ENCODE measurements at regions of chr12 and their contacts with region 1.

Region 1: DNA sequence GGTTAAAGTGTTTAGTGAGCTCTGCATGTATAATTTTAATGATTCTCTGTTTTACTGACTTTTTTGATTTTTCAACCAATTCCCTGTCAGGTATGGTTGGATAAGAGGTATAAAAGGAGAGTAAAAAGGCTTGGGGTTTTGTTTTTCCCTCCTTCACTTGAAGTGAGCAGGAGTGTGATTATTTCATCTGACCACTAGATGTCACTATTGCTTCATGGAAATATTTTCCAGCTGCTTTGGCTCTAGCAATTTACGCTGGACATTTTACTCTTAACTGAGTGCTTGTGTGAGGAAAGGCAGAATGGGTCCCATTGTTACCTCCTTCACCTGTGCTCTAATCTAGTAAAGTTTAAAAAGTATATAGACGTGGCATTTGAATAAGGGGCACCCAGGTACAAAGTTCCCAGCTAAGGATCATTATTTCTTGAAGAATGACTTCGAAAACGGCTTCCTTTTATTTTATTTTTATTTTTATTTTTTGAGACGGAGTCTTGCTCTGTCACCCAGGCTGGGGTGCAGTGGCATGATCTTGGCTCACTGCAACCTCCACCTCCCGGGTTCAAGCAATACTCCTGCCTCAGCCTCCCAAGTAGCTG is 66.5 kb downstream of the TBC1D30 start:
- DNase-seq: no peak
- ATAC-seq: peak in 3 of 4 donors; percentile 53 to 64 (median 61)
- H3K4me3 ChIP-seq: no peak overlapping the region
- H3K27ac ChIP-seq: no peak overlapping the region
- H3K4me1 ChIP-seq: no peaks in the 10 kb centered on the region
- H3K27me3 ChIP-seq: peaks cover 0 to 11% (median 0%) of the 10 kb centered on the region in 9 donors
- CTCF ChIP-seq: peak; percentile 71 to 90 (median 80)
- POLR2A ChIP-seq: no peak

Region 2: GRCh38 chr12:64946132-64946829 is 55.3 kb after region 1 on chr12:
- intact Hi-C with region 1: no loop called
- DNase-seq: peak in 4 of 5 donors; percentile 49 to 82 (median 59)
- ATAC-seq: peak; percentile 64 to 91 (median 84)
- H3K4me3 ChIP-seq: no peak overlapping the region
- H3K27ac ChIP-seq: peak overlapping the region in 4 of 12 donors; percentile 3 to 34 (median 13)
- H3K4me1 ChIP-seq: peaks cover 0 to 20% (median 11%) of the 10 kb centered on the region in 12 donors
- H3K27me3 ChIP-seq: no peaks in the 10 kb centered on the region
- CTCF ChIP-seq: no peak
- POLR2A ChIP-seq: no peak

Region 3: GRCh38 chr12:65106948-65107347 is 216.0 kb after region 1 on chr12:
- intact Hi-C with region 1: loop called in 6 of 10 experiments (anchors 5 to 10 kb)
- DNase-seq: no peak
- ATAC-seq: no peak
- H3K4me3 ChIP-seq: no peak overlapping the region
- H3K27ac ChIP-seq: no peak overlapping the region
- H3K4me1 ChIP-seq: no peaks in the 10 kb centered on the region
- H3K27me3 ChIP-seq: peaks cover 0 to 8% (median 0%) of the 10 kb centered on the region in 9 donors
- CTCF ChIP-seq: peak in 7 of 12 donors; percentile 14 to 42 (median 35)
- POLR2A ChIP-seq: no peak

Region 4: GRCh38 chr12:65121049-65121955 is 230.3 kb after region 1 on chr12 and contains the start of gene WIF1:
- intact Hi-C with region 1: loop called in 9 of 10 experiments (anchors 2 to 10 kb)
- DNase-seq: peak in 3 of 5 donors; percentile 19 to 71 (median 24)
- ATAC-seq: peak in 3 of 4 donors; percentile 11 to 42 (median 18)
- H3K4me3 ChIP-seq: peak within 1 kb of the TSS in 11 of 12 donors; percentile 10 to 38 (median 28)
- H3K27ac ChIP-seq: no peak within 1 kb of the TSS
- H3K4me1 ChIP-seq: peaks cover 0 to 13% (median 5%) of the 10 kb centered on the region in 12 donors
- H3K27me3 ChIP-seq: peaks cover 21 to 98% (median 59%) of the 10 kb centered on the region in 9 donors
- CTCF ChIP-seq: peak in 10 of 12 donors; percentile 6 to 40 (median 26)
- POLR2A ChIP-seq: no peak
- total RNA-seq, gene WIF1: not detected

Region 5: DNA sequence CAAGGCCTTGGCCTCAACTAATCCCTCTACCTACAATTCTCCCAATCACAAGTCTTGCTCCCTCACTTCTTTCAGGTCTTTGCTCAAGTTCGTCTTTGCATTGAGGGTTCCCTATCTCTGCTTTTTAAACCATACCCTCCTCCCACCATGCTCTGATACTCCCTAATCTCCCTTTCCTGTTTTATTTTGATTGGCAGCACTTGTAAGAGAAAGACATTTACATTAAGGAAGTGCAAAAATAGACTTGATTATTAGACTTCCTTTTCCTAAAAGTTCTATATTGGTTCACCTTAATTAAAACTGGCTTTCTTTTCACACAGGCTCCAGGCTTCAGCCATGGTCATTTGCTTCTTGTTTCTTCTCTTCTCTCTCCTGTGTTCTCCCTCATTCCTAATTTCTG is 248.4 kb after region 1 on chr12:
- intact Hi-C with region 1: no loop called
- DNase-seq: no peak
- ATAC-seq: no peak
- H3K4me3 ChIP-seq: no peak overlapping the region
- H3K27ac ChIP-seq: no peak overlapping the region
- H3K4me1 ChIP-seq: peaks cover 0 to 6% (median 0%) of the 10 kb centered on the region in 12 donors
- H3K27me3 ChIP-seq: peaks cover 0 to 8% (median 0%) of the 10 kb centered on the region in 9 donors
- CTCF ChIP-seq: no peak
- POLR2A ChIP-seq: no peak

Region 6: DNA sequence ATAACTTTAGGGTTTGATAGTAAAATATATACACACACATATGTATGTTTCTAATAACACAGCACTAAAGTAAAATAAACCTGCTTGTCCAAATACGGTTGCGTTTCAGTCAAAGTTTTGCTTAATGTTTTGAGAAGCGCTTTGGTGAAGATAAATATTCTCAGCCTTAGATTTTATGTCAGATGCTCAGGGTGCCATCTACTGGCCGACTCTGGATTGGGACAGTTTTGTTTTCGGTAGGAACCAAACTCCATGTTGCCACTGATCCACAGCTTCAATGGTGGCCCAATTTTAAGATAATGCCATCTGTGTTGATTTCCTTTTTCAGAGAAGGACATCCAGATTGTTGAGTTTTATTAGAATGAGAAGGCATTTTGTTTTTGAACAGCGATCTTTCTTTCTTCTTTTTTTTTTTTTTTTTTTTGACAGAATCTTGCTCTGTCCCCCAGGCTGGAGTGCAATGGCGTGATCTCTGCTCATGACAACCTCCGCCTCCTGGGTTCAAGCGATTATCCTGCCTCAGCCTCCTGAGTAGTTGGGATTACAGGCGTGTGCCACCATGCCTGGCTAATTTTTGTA is 1196.5 kb after region 1 on chr12:
- intact Hi-C with region 1: loop called in 4 of 10 experiments (anchors 2 to 5 kb)
- DNase-seq: peak; percentile 38 to 64 (median 45)
- ATAC-seq: peak in 3 of 4 donors; percentile 45 to 69 (median 62)
- H3K4me3 ChIP-seq: no peak overlapping the region
- H3K27ac ChIP-seq: no peak overlapping the region
- H3K4me1 ChIP-seq: peaks cover 0 to 2% (median 0%) of the 10 kb centered on the region in 12 donors
- H3K27me3 ChIP-seq: peaks cover 0 to 4% (median 0%) of the 10 kb centered on the region in 9 donors
- CTCF ChIP-seq: peak; percentile 56 to 85 (median 77)
- POLR2A ChIP-seq: no peak

Region 7: GRCh38 chr12:66107451-66107915 is 1216.5 kb after region 1 on chr12:
- intact Hi-C with region 1: loop called in 8 of 10 experiments (anchors 5 to 10 kb)
- DNase-seq: peak in 3 of 5 donors; percentile 34 to 37 (median 36)
- ATAC-seq: peak in 3 of 4 donors; percentile 75 to 87 (median 83)
- H3K4me3 ChIP-seq: no peak overlapping the region
- H3K27ac ChIP-seq: no peak overlapping the region
- H3K4me1 ChIP-seq: peaks cover 0 to 6% (median 0%) of the 10 kb centered on the region in 12 donors
- H3K27me3 ChIP-seq: no peaks in the 10 kb centered on the region
- CTCF ChIP-seq: peak; percentile 63 to 87 (median 80)
- POLR2A ChIP-seq: no peak

Region 8: DNA sequence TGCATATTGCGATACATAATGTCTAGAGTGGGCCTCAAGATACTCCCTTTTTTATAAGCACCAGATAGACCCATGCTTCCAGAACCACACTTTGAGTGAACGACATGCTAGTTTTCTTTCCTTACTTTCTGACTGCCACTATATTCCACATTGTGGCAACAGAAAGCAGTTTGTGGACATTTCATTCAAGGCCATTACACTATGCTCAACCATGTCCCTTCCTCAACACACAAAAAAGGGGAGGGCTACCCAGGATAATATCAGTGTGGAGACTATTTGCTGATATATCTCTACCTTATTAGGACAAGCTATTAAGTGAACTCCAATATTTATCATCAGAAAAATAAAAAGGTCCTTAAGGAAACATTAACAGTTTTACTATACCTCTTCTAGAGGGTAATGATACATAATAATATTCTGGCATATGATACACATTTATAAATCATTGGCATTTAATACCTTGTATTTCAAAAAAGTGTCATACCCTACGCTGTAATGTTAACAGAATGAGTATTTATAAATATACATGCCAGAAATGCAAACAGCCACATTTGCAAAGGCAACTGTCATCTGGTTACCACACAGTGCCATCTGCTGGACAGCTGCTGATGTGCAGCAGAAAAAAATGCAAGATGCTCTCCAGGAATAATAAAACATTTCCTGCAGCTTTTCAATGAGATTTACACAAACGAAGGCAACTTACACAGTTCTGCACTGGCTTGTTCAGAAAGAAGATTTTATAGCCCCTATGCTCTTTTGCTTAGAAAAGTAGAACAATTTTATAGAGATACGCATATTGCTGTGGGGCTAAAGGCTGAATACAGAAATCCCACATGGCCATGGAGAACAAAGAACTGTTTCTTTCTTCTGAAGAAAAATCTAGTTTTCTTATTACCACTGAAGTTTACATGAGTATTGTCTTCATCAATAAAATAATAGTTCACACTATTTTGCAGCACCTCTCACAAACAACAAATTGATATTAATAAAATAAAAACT is 1970.1 kb after region 1 on chr12:
- intact Hi-C with region 1: loop called in 2 of 10 experiments (anchors 5 to 10 kb)
- DNase-seq: peak; percentile 17 to 60 (median 36)
- ATAC-seq: no peak
- H3K4me3 ChIP-seq: no peak overlapping the region
- H3K27ac ChIP-seq: no peak overlapping the region
- H3K4me1 ChIP-seq: no peaks in the 10 kb centered on the region
- H3K27me3 ChIP-seq: peaks cover 0 to 3% (median 0%) of the 10 kb centered on the region in 9 donors
- CTCF ChIP-seq: peak; percentile 67 to 92 (median 84)
- POLR2A ChIP-seq: no peak